Activated CD4-positive, alpha-beta T cell treated with anti-CD3 and anti-CD28 coated beads, Interleukin-2, amount 10 ng/mL, durations not matched to agents 24 days and 14 days (primary cell): ENCODE measurements at regions of chr7 and their contacts with region 1.

Region 1: GRCh38 chr7:34991938-34992840 is 45.1 kb downstream of the DPY19L1 start:
- DNase-seq: peak; percentile 68
- H3K4me3 Mint-ChIP-seq: no peak overlapping the region
- H3K27ac Mint-ChIP-seq: peak overlapping the region; percentile 79
- H3K4me1 Mint-ChIP-seq: peaks cover 13% of the 10 kb centered on the region
- H3K27me3 Mint-ChIP-seq: no peaks in the 10 kb centered on the region

Region 2: GRCh38 chr7:34823640-34824258 is 168.4 kb before region 1 on chr7:
- intact Hi-C with region 1: loop called (anchors 10 kb)
- DNase-seq: peak; percentile 82
- H3K4me3 Mint-ChIP-seq: no peak overlapping the region
- H3K27ac Mint-ChIP-seq: no peak overlapping the region
- H3K4me1 Mint-ChIP-seq: no peaks in the 10 kb centered on the region
- H3K27me3 Mint-ChIP-seq: no peaks in the 10 kb centered on the region